ENCODE measurements at regions of chr22 and their contacts with region 1.

Region 1: GRCh38 chr22:27971926-27972325 is 52.9 kb upstream of the PITPNB start:
- DNase-seq: no peak
- H3K4me3 ChIP-seq: no peak overlapping the region
- H3K27ac ChIP-seq: no peak overlapping the region
- H3K4me1 ChIP-seq: peaks cover 23% of the 10 kb centered on the region
- H3K27me3 ChIP-seq: peaks cover 7% of the 10 kb centered on the region
- CTCF ChIP-seq: no peak

Region 2: DNA sequence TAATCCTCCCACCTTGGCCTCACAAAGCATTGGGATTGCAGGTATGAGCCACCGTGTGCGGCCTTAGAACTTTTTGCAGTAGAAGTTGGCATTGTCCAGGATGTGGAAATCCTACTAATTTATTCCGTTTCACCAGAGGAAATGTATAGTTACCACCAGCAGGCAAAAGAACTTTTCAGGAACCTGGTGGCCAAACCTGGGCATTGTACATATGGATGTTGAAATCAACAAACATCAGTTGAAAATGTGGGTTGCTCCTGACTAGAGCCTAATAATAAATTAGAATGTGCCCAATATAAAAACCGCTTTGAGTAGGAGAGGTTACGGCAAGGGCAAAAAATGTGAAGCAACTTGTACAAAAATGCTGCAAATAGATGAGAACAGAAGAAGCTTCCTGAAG is 869.2 kb after region 1 on chr22:
- CTCF ChIA-PET with region 1: no interaction called
- POLR2A ChIA-PET with region 1: interaction called, 12 read pairs
- intact Hi-C with region 1: no loop called
- DNase-seq: no peak
- H3K4me3 ChIP-seq: no peak overlapping the region
- H3K27ac ChIP-seq: no peak overlapping the region
- H3K4me1 ChIP-seq: no peaks in the 10 kb centered on the region
- H3K27me3 ChIP-seq: no peaks in the 10 kb centered on the region
- CTCF ChIP-seq: no peak

Measured in A673 (cell line).